Adrenal gland (tissue), 19 donors: ENCODE measurements at regions of chr1 and their contacts with region 1.

Region 1: DNA sequence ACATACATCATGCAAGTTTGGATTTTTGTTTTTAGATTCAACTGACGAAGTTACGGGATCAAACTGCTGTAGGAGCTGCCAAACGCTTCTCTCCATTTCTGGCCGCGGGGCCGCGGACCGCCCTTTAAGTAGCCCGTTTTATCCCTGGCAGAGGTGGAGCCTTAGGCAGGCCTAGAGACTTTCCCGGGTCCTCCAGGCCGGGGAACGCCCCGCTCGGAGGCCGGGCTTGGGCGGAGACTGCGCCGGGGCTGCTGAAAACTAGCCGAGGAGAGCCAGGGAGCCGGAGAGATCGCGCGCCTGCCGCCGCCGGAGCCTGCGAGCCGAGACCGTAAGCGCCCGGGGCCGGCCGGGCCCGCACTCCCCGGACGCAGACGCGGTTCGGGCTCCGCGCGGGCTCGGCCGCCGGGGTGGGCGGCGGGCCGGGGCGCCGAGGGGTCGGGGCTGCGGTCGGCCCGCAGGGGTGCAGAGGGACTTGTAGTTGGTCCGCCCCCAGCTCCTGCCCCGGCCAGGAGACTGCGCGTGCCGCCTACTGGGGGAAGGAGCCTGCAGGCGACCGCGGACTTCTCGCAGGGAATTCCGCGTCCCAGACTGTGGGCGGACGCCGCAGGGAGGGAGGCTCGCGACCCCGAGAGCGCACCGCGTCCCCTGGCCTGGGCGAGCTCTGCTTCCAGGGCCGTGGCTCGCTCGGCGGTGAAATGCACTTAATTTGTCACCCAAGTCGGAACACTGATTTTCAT is at the start of gene EPHX1:
- DNase-seq: peak; percentile 91 to 95 (median 93)
- H3K4me3 ChIP-seq: peak within 1 kb of the TSS; percentile 30 to 93 (median 78)
- H3K27ac ChIP-seq: peak within 1 kb of the TSS; percentile 81 to 98 (median 97)
- H3K4me1 ChIP-seq: peaks cover 41 to 47% of the 10 kb centered on the region in 2 donors
- H3K27me3 ChIP-seq: no peaks in the 10 kb centered on the region
- CTCF ChIP-seq: peak in 4 of 6 experiments; percentile 12 to 41 (median 20)
- POLR2A ChIP-seq: peak; percentile 94 to 97
- total RNA-seq, gene EPHX1: 251 to 3,548 (median 1,695) TPM

Region 2: GRCh38 chr1:225877580-225877979 is 67.6 kb after region 1 on chr1:
- intact Hi-C with region 1: loop called in 1 of 2 experiments (anchors 2 kb)
- DNase-seq: peak in 6 of 7 donors; percentile 58 to 80 (median 69)
- H3K4me3 ChIP-seq: no peak overlapping the region
- H3K27ac ChIP-seq: peak overlapping the region in 2 of 5 donors; percentile 49 to 54
- H3K4me1 ChIP-seq: peaks cover 25 to 38% of the 10 kb centered on the region in 2 donors
- H3K27me3 ChIP-seq: no peaks in the 10 kb centered on the region
- CTCF ChIP-seq: peak; percentile 21 to 42 (median 37)
- POLR2A ChIP-seq: no peak

Region 3: GRCh38 chr1:226736908-226737818 is 927.2 kb after region 1 on chr1:
- intact Hi-C with region 1: no loop called
- DNase-seq: peak in 5 of 7 donors; percentile 22 to 36 (median 33)
- H3K4me3 ChIP-seq: peak overlapping the region in 2 of 4 donors; percentile 40 to 65
- H3K27ac ChIP-seq: peak overlapping the region in 3 of 5 donors; percentile 18 to 86 (median 71)
- H3K4me1 ChIP-seq: peaks cover 0 to 30% of the 10 kb centered on the region in 2 donors
- H3K27me3 ChIP-seq: no peaks in the 10 kb centered on the region
- CTCF ChIP-seq: peak in 1 of 6 experiments; percentile 1
- POLR2A ChIP-seq: no peak